Activated CD4-positive, alpha-beta T cell treated with anti-CD3 and anti-CD28 coated beads, Interleukin-2, amount 10 ng/mL, durations not matched to agents 24 days and 14 days (primary cell): ENCODE measurements at regions of chr13 and their contacts with region 1.

Region 1: GRCh38 chr13:41916173-41916954 is 44.5 kb downstream of the VWA8 start:
- DNase-seq: peak; percentile 76
- H3K4me3 Mint-ChIP-seq: peak overlapping the region; percentile 76
- H3K27ac Mint-ChIP-seq: peak overlapping the region; percentile 86
- H3K4me1 Mint-ChIP-seq: peaks cover 44% of the 10 kb centered on the region
- H3K27me3 Mint-ChIP-seq: no peaks in the 10 kb centered on the region

Region 2: GRCh38 chr13:41456768-41457588 is 459.4 kb before region 1 on chr13 and contains the start of gene RGCC:
- intact Hi-C with region 1: loop called (anchors 1 kb)
- DNase-seq: peak; percentile 97
- H3K4me3 Mint-ChIP-seq: peak within 1 kb of the TSS; percentile 93
- H3K27ac Mint-ChIP-seq: peak within 1 kb of the TSS; percentile 97
- H3K4me1 Mint-ChIP-seq: peaks cover 41% of the 10 kb centered on the region
- H3K27me3 Mint-ChIP-seq: peaks cover 26% of the 10 kb centered on the region
- total RNA-seq, gene RGCC: 113 and 117 TPM in 2 replicates

Region 3: DNA sequence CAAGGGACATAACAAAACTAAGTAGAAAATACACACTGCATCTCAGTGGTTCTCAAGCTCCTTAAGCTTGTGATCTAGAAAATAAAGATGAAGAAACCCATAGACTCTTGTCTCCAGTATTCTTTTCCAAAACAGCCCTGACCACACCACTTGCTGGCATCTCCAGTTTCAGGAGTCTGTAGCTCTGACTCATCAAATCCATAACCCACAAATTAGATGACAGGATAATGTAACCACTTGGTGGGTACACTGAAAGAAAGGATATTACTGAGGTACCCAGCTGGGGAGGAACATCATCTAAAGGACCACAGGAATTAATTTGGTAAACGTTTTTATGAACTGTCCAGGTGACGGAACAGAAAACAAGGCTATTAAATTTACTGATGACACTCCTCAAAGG is 170.1 kb before region 1 on chr13:
- intact Hi-C with region 1: no loop called
- DNase-seq: no peak
- H3K4me3 Mint-ChIP-seq: no peak overlapping the region
- H3K27ac Mint-ChIP-seq: no peak overlapping the region
- H3K4me1 Mint-ChIP-seq: no peaks in the 10 kb centered on the region
- H3K27me3 Mint-ChIP-seq: no peaks in the 10 kb centered on the region

Region 4: DNA sequence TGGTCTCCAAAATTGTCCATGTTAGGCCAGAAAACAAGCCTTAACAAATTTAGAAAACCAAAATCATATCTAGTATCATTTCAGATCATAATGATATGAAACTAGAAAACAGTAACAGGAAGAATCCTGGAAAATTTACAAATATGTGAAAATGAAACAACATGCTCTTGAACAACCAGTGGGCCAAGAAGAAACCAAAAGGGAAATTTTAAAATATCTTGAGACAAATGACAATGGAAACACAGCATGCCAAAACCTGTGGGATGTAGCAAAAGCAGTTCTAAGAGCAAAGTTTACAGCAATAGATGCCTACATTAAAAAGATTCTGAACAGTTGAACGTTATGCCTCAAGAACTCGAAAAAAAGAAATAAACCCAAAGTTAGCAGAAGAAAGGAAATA is 12.0 kb after region 1 on chr13:
- intact Hi-C with region 1: loop called (anchors 1 kb)
- DNase-seq: no peak
- H3K4me3 Mint-ChIP-seq: peak overlapping the region; percentile 75
- H3K27ac Mint-ChIP-seq: peak overlapping the region; percentile 83
- H3K4me1 Mint-ChIP-seq: peaks cover 42% of the 10 kb centered on the region
- H3K27me3 Mint-ChIP-seq: no peaks in the 10 kb centered on the region

Region 5: DNA sequence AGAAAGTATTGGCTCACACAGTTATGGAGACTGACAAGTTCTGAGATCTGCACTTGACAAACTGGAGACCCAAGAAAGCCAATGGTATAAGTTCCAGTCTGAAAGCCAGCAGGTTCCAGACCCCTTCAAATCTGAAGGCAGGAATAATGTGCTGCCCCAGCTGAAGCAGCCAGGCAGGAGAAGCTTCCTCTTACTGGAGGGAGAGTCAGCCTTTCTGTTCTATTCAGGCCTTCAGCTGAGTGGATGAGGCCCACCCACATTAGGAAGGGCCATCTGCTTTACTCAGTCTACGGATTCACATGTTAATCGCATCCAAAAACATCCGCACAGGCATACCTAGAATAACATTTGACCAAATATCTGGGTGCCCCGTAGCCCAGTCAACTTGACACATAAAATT is 52.7 kb after region 1 on chr13:
- intact Hi-C with region 1: no loop called
- DNase-seq: peak; percentile 53
- H3K4me3 Mint-ChIP-seq: no peak overlapping the region
- H3K27ac Mint-ChIP-seq: no peak overlapping the region
- H3K4me1 Mint-ChIP-seq: peaks cover 11% of the 10 kb centered on the region
- H3K27me3 Mint-ChIP-seq: no peaks in the 10 kb centered on the region

Region 6: DNA sequence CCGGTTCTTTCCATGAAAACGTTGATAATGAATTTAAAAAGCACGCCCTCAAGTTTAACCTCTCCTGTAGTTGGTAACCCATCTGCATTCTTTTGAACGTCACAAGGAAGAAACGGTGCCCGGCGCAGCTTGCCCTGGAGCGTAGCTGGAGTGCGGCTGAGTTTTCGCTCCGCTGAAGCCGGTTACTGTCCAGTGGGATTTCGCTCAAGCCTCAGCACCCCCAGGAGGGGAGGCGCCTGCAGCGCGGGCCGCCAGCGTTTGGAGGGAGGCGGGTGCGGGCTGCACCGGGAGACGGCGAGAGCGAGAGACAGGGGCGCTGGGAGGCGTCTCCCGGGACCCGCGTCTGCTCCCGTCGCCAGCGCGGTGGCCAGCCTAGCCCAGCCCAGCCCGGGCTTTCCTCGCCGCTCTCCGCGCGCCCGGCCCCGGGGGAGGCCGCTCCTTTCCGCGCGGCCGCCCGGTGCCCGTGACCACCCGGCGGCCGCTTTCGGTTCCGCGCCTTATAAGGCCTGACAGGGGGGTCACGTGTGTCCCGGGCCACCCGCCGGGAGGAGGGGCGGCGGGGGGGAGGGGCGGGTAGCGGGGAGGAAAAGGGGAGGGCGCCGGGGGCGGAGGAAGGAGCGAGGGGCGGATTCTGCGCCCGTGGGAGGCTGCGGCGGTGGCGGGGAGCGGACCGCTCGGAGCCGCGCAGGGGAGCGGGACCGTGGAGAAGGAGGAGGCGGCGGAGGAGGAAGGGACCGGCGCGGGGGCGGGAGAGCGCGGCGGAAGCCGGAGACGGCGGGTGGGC is 123.8 kb after region 1 on chr13:
- intact Hi-C with region 1: loop called (anchors 1 kb)
- DNase-seq: peak; percentile 95
- H3K4me3 Mint-ChIP-seq: peak overlapping the region; percentile 84
- H3K27ac Mint-ChIP-seq: peak overlapping the region; percentile 83
- H3K4me1 Mint-ChIP-seq: peaks cover 19% of the 10 kb centered on the region
- H3K27me3 Mint-ChIP-seq: peaks cover 31% of the 10 kb centered on the region

Region 7: DNA sequence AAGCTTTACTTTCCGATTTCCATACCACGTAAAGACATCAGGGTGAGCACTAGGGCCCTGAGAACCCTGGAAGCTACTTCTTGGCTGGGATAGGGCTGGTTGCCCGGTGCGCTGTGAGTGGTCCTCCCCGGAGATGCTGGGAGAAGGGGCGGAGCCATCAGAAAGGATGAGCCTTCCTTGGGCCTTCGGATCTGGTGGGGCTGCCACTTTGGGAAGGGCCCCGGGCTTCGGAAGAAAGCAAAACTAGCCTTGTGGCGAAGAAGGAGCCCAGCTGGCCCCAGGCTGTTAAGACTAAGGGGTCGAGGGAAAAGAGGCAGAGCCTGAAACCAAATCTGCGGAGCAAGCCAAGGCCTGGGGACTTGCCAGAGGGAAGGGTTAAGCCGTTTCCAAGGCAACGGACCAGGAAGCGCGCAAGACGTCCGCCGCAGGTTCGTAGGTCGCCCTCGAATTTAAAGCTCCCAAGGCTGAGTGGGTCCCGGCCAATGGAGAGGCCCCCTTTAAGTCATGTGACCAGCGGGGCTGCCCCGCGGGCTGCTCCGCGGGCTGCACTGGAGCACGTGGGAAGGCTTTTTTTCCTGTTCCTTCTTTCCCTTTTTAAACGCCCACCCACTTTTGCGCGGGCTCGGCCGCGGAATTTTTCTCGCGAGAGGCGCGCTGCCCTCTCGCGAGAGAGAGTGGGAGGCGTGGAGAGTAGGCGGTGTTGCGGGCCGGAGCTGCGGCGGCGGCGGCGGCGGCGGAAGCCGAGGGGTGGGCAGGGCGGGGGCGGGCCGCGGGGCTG is 355.2 kb after region 1 on chr13:
- intact Hi-C with region 1: loop called (anchors 10 kb)
- DNase-seq: peak; percentile 98
- H3K4me3 Mint-ChIP-seq: peak overlapping the region; percentile 97
- H3K27ac Mint-ChIP-seq: peak overlapping the region; percentile 99
- H3K4me1 Mint-ChIP-seq: peaks cover 44% of the 10 kb centered on the region
- H3K27me3 Mint-ChIP-seq: peaks cover 3% of the 10 kb centered on the region

Region 8: DNA sequence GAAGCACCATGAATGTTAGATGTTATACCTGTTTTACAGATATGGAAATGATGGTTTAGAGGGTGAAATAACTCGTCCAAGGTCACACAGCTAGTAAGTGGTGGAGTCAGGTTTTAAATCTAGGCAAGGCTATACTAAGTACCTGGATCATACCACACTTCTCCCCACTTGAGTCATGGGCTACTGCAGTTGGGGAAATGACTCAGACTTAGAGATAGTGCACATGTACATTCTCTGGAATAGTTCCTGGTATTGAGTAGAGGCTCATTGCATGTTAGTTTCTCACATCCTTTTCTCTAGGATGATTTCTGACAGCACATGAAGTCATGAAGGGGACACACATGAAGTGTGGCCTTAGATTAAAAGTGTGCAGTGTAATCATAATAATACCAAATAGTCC is 581.4 kb after region 1 on chr13:
- intact Hi-C with region 1: loop called (anchors 5 kb)
- DNase-seq: peak; percentile 72
- H3K4me3 Mint-ChIP-seq: no peak overlapping the region
- H3K27ac Mint-ChIP-seq: peak overlapping the region; percentile 61
- H3K4me1 Mint-ChIP-seq: peaks cover 47% of the 10 kb centered on the region
- H3K27me3 Mint-ChIP-seq: no peaks in the 10 kb centered on the region